Calu3 (cell line): ENCODE measurements at regions of chr17 and their contacts with region 1.

Region 1: DNA sequence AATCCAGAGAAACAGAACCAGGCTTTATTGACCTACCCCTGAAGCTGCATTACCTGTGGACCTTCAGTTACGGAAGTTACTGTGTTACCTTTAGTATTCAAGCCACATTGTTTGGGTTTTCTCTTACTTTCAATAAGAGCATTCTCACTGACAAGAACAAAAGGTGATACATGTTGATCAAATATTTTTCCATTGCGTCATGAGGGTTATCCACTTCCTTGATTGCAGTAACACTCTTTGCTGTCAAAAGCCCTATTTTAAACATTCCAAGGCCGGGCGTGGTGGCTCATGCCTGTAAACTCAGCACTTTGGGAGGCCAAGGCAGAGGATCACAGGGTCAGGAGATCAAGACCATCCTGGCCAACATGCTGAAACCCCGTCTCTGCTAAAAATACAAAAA is 28.6 kb upstream of the PAFAH1B1 start:
- DNase-seq: peak; percentile 62
- H3K4me3 Mint-ChIP-seq: no peak overlapping the region
- H3K27ac Mint-ChIP-seq: peak overlapping the region; percentile 90
- H3K4me1 Mint-ChIP-seq: peaks cover 8% of the 10 kb centered on the region
- H3K27me3 Mint-ChIP-seq: peaks cover 8% of the 10 kb centered on the region
- CTCF ChIP-seq: no peak

Region 2: DNA sequence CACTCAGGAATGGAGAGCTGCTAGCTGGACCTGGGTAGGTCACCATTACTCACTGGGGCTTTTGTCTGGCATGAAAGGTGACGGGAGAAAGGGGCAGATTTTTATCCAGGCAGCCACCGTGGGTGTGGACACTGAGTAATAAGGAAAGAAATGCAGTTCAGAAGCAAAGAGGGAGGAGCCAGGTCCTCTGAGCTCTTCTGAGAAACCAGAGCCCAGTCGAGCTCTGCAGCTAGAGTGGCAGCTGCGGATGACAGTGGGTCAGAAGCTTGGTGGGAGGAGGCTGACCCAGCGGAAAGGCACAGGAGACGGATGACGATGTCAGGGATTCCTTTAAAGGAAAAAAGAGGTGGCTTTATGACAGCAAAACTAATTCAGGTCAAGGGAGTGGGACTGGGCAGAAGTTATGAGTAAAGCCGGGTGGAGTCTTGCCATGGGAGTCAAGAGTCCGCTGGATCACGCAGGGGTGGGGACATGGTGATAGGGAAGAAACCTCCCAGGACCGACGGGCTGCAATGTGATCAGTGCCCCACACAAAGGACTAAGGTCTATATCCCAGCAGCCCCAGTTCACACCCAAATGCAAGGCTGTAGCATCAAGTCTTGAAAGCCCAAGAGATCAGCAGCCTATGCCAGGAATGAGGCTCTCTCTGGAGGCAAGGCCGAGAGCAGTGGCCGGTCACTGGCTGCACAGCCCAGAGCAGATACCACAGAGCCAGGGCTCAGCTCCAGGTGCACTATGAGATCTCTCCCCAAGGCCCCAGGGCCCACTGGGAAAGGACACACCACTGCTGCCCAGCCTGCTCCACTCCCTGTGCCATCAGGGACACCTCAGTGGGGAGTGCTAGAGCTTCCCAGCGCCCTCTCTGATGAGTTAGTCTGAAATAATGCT is 157.7 kb before region 1 on chr17:
- CTCF ChIA-PET with region 1: no interaction called
- intact Hi-C with region 1: no loop called
- DNase-seq: peak; percentile 77
- H3K4me3 Mint-ChIP-seq: peak overlapping the region; percentile 60
- H3K27ac Mint-ChIP-seq: peak overlapping the region; percentile 94
- H3K4me1 Mint-ChIP-seq: peaks cover 38% of the 10 kb centered on the region
- H3K27me3 Mint-ChIP-seq: no peaks in the 10 kb centered on the region
- CTCF ChIP-seq: no peak

Region 3: GRCh38 chr17:2511462-2512369 is 53.2 kb before region 1 on chr17 and contains the start of gene METTL16:
- CTCF ChIA-PET with region 1: no interaction called
- intact Hi-C with region 1: loop called (anchors 10 kb)
- DNase-seq: peak; percentile 93
- H3K4me3 Mint-ChIP-seq: no peak within 1 kb of the TSS
- H3K27ac Mint-ChIP-seq: no peak within 1 kb of the TSS
- H3K4me1 Mint-ChIP-seq: peaks cover 13% of the 10 kb centered on the region
- H3K27me3 Mint-ChIP-seq: no peaks in the 10 kb centered on the region
- CTCF ChIP-seq: no peak
- total RNA-seq, gene METTL16: 27.8 and 28.6 TPM in 2 replicates

Region 4: GRCh38 chr17:2613089-2613808 is 48.4 kb after region 1 on chr17:
- CTCF ChIA-PET with region 1: no interaction called
- intact Hi-C with region 1: no loop called
- DNase-seq: no peak
- H3K4me3 Mint-ChIP-seq: no peak overlapping the region
- H3K27ac Mint-ChIP-seq: no peak overlapping the region
- H3K4me1 Mint-ChIP-seq: no peaks in the 10 kb centered on the region
- H3K27me3 Mint-ChIP-seq: no peaks in the 10 kb centered on the region
- CTCF ChIP-seq: no peak